ENCODE measurements at regions of chr9 and their contacts with region 1.

Region 1: GRCh38 chr9:121839726-121840500 is 188.5 kb downstream of the DAB2IP start:
- DNase-seq: no peak
- ATAC-seq: no peak
- H3K4me3 ChIP-seq: no peak overlapping the region
- H3K27ac ChIP-seq: no peak overlapping the region
- H3K4me1 ChIP-seq: no peaks in the 10 kb centered on the region
- H3K27me3 ChIP-seq: no peaks in the 10 kb centered on the region

Region 2: GRCh38 chr9:121770415-121771273 is 69.3 kb before region 1 on chr9:
- intact Hi-C with region 1: loop called in 1 of 4 experiments (anchors 10 kb)
- DNase-seq: peak in 2 of 3 donors; percentile 33 to 47
- ATAC-seq: no peak
- H3K4me3 ChIP-seq: no peak overlapping the region
- H3K27ac ChIP-seq: no peak overlapping the region
- H3K4me1 ChIP-seq: peaks cover 3% of the 10 kb centered on the region
- H3K27me3 ChIP-seq: no peaks in the 10 kb centered on the region

Region 3: GRCh38 chr9:121902461-121903135 is 62.7 kb after region 1 on chr9:
- intact Hi-C with region 1: no loop called
- DNase-seq: no peak
- ATAC-seq: peak; percentile 62 to 74
- H3K4me3 ChIP-seq: no peak overlapping the region
- H3K27ac ChIP-seq: no peak overlapping the region
- H3K4me1 ChIP-seq: peaks cover 2% of the 10 kb centered on the region
- H3K27me3 ChIP-seq: no peaks in the 10 kb centered on the region

Region 4: DNA sequence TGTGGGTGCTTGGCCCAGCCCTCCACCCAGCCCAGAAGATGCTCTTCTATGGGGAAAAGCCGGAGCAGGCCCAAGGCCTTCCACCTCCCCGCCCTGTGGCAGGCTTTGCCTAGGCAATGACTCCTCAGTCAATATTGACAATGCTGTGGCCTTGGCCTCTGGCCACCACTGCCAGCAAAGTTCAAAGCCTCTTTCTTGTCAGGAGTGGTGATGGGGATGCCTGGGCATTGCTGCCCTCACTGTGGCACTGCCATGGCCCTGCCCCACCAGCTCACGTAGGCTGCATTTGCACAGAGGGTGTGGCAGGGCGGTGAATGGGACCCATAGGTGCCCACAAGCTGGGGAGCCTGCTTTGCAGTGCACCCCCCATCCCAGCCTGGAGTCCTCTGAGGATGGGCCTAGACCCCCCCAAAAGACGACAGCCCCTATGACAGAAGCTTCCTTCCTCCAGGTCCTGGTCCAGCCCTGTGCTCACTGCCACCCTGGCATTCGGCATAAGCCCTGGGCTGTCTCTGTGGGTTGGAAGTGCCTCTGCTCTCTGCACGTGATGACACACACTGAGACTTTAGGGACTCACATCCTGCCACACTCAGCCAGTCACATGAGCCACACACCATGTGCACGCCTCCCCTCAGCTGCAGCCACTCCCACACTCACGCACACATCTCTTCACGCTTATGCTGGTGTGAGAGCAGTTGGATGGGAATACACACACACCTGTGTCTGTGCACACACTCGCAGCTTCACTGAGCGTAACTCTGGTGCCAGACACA is 350.9 kb after region 1 on chr9:
- intact Hi-C with region 1: no loop called
- DNase-seq: no peak
- ATAC-seq: peak in 1 of 2 donors; percentile 25
- H3K4me3 ChIP-seq: no peak overlapping the region
- H3K27ac ChIP-seq: no peak overlapping the region
- H3K4me1 ChIP-seq: no peaks in the 10 kb centered on the region
- H3K27me3 ChIP-seq: no peaks in the 10 kb centered on the region

Measured in right cardiac atrium (tissue), 5 donors.